ENCODE measurements at regions of chr11 and their contacts with region 1.

Region 1: GRCh38 chr11:75532200-75533048 is 6.7 kb upstream of the GDPD5 start:
- DNase-seq: peak; percentile 79
- H3K4me3 ChIP-seq: no peak overlapping the region
- H3K27ac ChIP-seq: no peak overlapping the region
- H3K4me1 ChIP-seq: peaks cover 7% of the 10 kb centered on the region
- CTCF ChIP-seq: peak; percentile 94

Region 2: DNA sequence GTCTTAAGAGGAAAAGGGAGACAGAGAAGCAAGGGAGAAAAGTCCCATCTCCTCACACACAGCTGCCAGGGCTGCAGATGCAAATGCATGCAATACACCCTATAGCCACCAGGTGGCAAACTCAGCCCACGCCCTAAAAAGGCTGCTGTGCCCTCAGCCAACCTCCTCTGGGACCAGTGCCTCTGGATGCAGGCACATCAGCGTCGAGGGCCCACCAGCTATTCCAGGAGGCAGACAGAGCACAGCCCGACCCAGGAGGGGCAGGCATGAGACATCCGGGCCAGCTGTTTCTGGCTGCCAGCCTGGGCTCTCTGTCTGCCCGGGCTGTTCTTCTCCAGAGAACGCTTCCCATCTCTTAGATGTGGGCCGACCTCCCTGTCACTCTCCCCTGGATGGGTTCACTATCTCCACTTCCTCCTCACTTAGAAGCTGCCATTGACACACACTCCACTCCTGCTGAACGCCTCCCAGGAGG is 252.2 kb before region 1 on chr11:
- CTCF ChIA-PET with region 1: no interaction called
- POLR2A ChIA-PET with region 1: no interaction called
- intact Hi-C with region 1: loop called (anchors 5 kb)
- DNase-seq: peak; percentile 71
- H3K4me3 ChIP-seq: no peak overlapping the region
- H3K27ac ChIP-seq: no peak overlapping the region
- H3K4me1 ChIP-seq: peaks cover 11% of the 10 kb centered on the region
- CTCF ChIP-seq: peak; percentile 90

Region 3: DNA sequence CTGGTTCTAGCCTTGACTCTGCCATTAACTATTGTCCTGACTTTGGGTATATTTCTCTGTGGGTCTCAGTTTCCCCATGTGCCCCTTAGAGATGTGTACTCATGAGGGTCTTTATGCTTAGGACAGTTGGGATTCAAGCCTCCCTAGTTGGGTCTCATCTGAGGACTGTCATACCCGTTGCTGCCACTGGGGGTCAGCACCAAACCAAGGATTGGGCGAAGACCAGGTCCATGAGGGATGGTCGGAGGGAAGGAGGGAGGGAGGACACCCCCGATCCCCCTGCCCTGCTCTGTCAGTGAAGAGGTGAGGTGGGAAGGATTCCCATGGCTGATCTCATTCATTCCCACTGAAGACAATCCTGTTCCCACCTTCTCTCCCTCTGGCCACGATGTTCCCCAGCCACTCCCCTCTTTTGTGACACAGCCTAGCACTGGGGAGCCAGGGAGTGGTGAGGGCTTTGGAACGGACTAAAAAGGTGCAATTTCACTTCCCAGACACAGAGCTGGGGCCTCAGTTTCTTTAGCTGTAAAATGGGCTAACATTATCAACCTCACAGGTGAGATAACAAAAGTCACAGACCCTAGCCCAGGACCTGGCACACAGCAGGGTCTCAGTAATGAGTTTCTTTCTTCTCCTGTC is 87.0 kb before region 1 on chr11:
- CTCF ChIA-PET with region 1: interaction called, 3 read pairs
- POLR2A ChIA-PET with region 1: no interaction called
- intact Hi-C with region 1: loop called (anchors 1 kb)
- DNase-seq: peak; percentile 66
- H3K4me3 ChIP-seq: no peak overlapping the region
- H3K27ac ChIP-seq: no peak overlapping the region
- H3K4me1 ChIP-seq: no peaks in the 10 kb centered on the region
- CTCF ChIP-seq: peak; percentile 97

Region 4: GRCh38 chr11:76008474-76008873 is 476.1 kb after region 1 on chr11:
- CTCF ChIA-PET with region 1: no interaction called
- POLR2A ChIA-PET with region 1: no interaction called
- intact Hi-C with region 1: no loop called
- DNase-seq: no peak
- H3K4me3 ChIP-seq: no peak overlapping the region
- H3K27ac ChIP-seq: no peak overlapping the region
- H3K4me1 ChIP-seq: no peaks in the 10 kb centered on the region
- CTCF ChIP-seq: no peak